Posterior cingulate gyrus (tissue), 11 donors: ENCODE measurements at regions of chr7 and their contacts with region 1.

Region 1: DNA sequence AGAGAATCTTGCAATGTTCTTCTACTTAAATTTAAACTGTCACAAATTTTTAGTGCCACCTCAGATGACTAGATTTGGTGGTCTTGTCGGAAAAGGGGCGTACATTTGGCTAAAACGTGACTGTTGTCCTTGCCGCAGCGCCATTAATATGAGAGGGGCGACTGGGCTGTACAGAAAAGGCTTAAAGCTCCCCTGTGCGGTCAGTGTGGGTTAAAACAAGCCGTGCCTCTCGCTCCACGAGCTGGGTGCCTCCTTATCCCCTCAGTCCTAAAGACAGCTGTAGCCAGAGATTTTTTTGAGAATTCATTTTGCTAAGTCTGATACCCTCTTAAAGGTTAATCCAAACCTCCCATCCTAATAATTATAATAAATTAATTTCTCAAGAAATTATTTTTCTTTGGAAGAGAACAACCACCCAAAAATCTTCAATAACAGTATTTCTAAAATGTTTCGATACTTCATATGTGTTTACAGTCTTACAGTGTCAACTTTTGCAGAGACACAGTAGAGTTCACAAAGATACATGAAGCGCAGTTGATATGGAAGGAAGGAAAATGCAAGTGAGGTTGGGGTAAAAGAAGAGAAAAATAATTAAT is 68.6 kb downstream of the C7orf25 start:
- DNase-seq: peak in 8 of 10 donors; percentile 27 to 87 (median 48)

Region 2: DNA sequence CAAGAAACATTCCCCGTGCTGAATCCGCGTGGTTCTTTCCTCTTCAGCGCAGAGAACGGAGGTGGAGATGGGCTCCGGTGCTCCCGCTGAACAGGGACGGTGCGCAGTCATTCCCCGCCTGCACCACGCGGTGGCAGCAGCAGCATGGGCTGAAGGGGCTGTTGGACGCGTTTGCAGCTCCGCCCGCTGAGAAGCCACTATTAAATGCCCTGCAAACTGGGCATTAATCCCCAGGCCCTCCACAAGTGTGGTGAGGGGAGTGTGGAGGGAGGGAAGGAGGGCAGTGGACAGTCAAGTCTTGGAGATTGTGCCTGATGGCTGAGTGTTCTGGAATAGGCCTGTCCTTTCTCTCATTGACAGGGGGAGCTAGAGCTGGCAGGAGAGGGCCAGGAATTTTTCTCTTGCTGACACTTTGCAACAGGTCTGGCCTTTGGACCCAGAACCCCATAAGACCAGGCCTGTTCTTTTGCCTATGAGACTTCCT is 900.2 kb before region 1 on chr7:
- intact Hi-C with region 1: loop called (anchors 2 kb)
- DNase-seq: peak; percentile 76 to 98 (median 88)

Region 3: GRCh38 chr7:42792841-42793240 is 50.5 kb before region 1 on chr7:
- intact Hi-C with region 1: no loop called
- DNase-seq: no peak